Naive thymus-derived CD4-positive, alpha-beta T cell (primary cell): ENCODE measurements at regions of chr1 and their contacts with region 1.

Region 1: GRCh38 chr1:229479660-229480399 is 28.3 kb downstream of the NUP133 start:
- DNase-seq: no peak
- ATAC-seq: no peak
- H3K4me3 ChIP-seq: no peak overlapping the region
- H3K4me3 Mint-ChIP-seq: no peak overlapping the region
- H3K27ac ChIP-seq: no peak overlapping the region
- H3K27ac Mint-ChIP-seq: peak overlapping the region in 2 of 9 donors; percentile 36 to 43
- H3K4me1 ChIP-seq: no peaks in the 10 kb centered on the region
- H3K4me1 Mint-ChIP-seq: peaks cover 4 to 19% (median 9%) of the 10 kb centered on the region in 7 donors
- H3K27me3 ChIP-seq: no peaks in the 10 kb centered on the region
- H3K27me3 Mint-ChIP-seq: no peaks in the 10 kb centered on the region

Region 2: GRCh38 chr1:229430761-229431283 is 49.0 kb before region 1 on chr1:
- CTCF ChIA-PET with region 1: no interaction called
- POLR2A ChIA-PET with region 1: no interaction called
- intact Hi-C with region 1: no loop called
- DNase-seq: peak in 7 of 9 donors; percentile 20 to 55 (median 32)
- ATAC-seq: peak; percentile 54
- H3K4me3 ChIP-seq: peak overlapping the region; percentile 45
- H3K4me3 Mint-ChIP-seq: peak overlapping the region; percentile 66 to 95 (median 84)
- H3K27ac ChIP-seq: no peak overlapping the region
- H3K27ac Mint-ChIP-seq: peak overlapping the region in 2 of 9 donors; percentile 13 to 56
- H3K4me1 ChIP-seq: peaks cover 8 to 16% of the 10 kb centered on the region in 2 donors
- H3K4me1 Mint-ChIP-seq: peaks cover 6 to 29% (median 26%) of the 10 kb centered on the region in 7 donors
- H3K27me3 ChIP-seq: peaks cover 4 to 23% of the 10 kb centered on the region in 2 donors
- H3K27me3 Mint-ChIP-seq: peaks cover 54 to 87% (median 66%) of the 10 kb centered on the region in 5 donors

Region 3: GRCh38 chr1:229514578-229515275 is 34.9 kb after region 1 on chr1:
- CTCF ChIA-PET with region 1: interaction called, 4 read pairs
- POLR2A ChIA-PET with region 1: no interaction called
- intact Hi-C with region 1: loop called in 1 of 2 experiments (anchors 1 kb)
- DNase-seq: peak in 8 of 9 donors; percentile 34 to 76 (median 70)
- ATAC-seq: peak; percentile 98
- H3K4me3 ChIP-seq: no peak overlapping the region
- H3K4me3 Mint-ChIP-seq: no peak overlapping the region
- H3K27ac ChIP-seq: no peak overlapping the region
- H3K27ac Mint-ChIP-seq: peak overlapping the region in 5 of 9 donors; percentile 6 to 86 (median 32)
- H3K4me1 ChIP-seq: no peaks in the 10 kb centered on the region
- H3K4me1 Mint-ChIP-seq: peaks cover 0 to 9% (median 7%) of the 10 kb centered on the region in 7 donors
- H3K27me3 ChIP-seq: no peaks in the 10 kb centered on the region
- H3K27me3 Mint-ChIP-seq: peaks cover 0 to 5% (median 0%) of the 10 kb centered on the region in 5 donors